Activated T-helper 1 cell treated with anti-CD3 and anti-CD28 coated beads, Interleukin-12 subunit alpha, Interleukin-12 subunit beta, Interleukin-2, Interleukin-4 antibody, amounts not matched to agents 30 ng/mL and 10 ng/mL and 1 ng/mL, durations not matched to agents 14 hours and 24 hours and 36 hours (primary cell): ENCODE measurements at regions of chr7 and their contacts with region 1.

Region 1: GRCh38 chr7:99975782-99976521 is at the start of gene AZGP1:
- DNase-seq: no peak
- H3K4me3 Mint-ChIP-seq: no peak within 1 kb of the TSS
- H3K27ac Mint-ChIP-seq: no peak within 1 kb of the TSS
- H3K4me1 Mint-ChIP-seq: no peaks in the 10 kb centered on the region
- H3K27me3 Mint-ChIP-seq: peaks cover 4% of the 10 kb centered on the region
- total RNA-seq, gene AZGP1: not detected in 2 replicates

Region 2: GRCh38 chr7:99543081-99543850 is 432.7 kb before region 1 on chr7:
- intact Hi-C with region 1: no loop called
- DNase-seq: no peak
- H3K4me3 Mint-ChIP-seq: no peak overlapping the region
- H3K27ac Mint-ChIP-seq: no peak overlapping the region
- H3K4me1 Mint-ChIP-seq: no peaks in the 10 kb centered on the region
- H3K27me3 Mint-ChIP-seq: no peaks in the 10 kb centered on the region

Region 3: GRCh38 chr7:99740573-99741440 is 235.1 kb before region 1 on chr7:
- intact Hi-C with region 1: no loop called
- DNase-seq: no peak
- H3K4me3 Mint-ChIP-seq: no peak overlapping the region
- H3K27ac Mint-ChIP-seq: no peak overlapping the region
- H3K4me1 Mint-ChIP-seq: no peaks in the 10 kb centered on the region
- H3K27me3 Mint-ChIP-seq: no peaks in the 10 kb centered on the region

Region 4: DNA sequence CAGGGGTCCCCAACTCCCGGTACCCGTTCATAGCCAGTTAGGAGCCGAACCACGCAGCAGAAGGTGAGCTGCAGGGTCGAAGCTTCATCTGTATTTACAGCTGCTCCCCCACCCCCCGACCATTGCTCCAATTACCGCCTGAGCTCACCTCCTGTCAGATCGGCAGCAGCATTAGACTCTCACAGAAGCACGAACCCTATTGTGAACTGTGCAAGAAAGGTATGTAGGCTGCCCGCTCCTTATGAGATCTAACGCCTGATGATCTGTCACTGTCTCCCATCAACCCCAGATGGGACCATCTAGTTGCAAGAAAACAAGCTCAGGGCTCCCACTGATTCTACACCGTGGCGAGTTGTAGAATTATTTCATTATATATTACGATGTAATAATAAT is 14.5 kb after region 1 on chr7:
- intact Hi-C with region 1: loop called (anchors 1 kb)
- DNase-seq: no peak
- H3K4me3 Mint-ChIP-seq: no peak overlapping the region
- H3K27ac Mint-ChIP-seq: no peak overlapping the region
- H3K4me1 Mint-ChIP-seq: peaks cover 4% of the 10 kb centered on the region
- H3K27me3 Mint-ChIP-seq: peaks cover 9% of the 10 kb centered on the region